A673 (cell line): ENCODE measurements at regions of chr11 and their contacts with region 1.

Region 1: DNA sequence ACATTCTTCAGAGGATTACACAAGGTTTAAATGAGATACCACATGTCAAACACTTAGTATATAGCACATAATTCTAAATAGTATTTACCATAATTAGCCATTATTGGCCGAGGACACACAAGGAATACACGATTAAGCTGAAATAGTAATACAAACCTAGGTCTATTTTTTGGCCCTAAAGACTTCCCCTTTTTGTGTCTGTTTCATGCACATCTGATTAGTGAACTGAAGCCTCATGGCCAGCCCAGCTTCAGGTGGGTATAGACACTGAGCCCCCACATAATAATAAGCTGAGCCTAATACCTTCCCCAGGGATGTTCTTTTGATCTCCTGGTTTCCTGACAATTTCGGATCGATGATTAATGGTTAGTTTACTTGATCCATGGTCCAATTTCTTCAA is 2.1 kb downstream of the GLYATL1B start:
- DNase-seq: no peak
- H3K4me3 ChIP-seq: no peak overlapping the region
- H3K27ac ChIP-seq: no peak overlapping the region
- H3K4me1 ChIP-seq: no peaks in the 10 kb centered on the region
- H3K27me3 ChIP-seq: peaks cover 54% of the 10 kb centered on the region
- CTCF ChIP-seq: no peak

Region 2: GRCh38 chr11:59040607-59041006 is 47.6 kb before region 1 on chr11:
- CTCF ChIA-PET with region 1: no interaction called
- POLR2A ChIA-PET with region 1: no interaction called
- intact Hi-C with region 1: loop called (anchors 1 kb)
- DNase-seq: no peak
- H3K4me3 ChIP-seq: no peak overlapping the region
- H3K27ac ChIP-seq: no peak overlapping the region
- H3K4me1 ChIP-seq: no peaks in the 10 kb centered on the region
- H3K27me3 ChIP-seq: peaks cover 13% of the 10 kb centered on the region
- CTCF ChIP-seq: no peak